ENCODE measurements at regions of chr4 and their contacts with region 1.

Region 1: GRCh38 chr4:40719008-40719623 is 30.6 kb upstream of the NSUN7 start:
- DNase-seq: peak; percentile 71
- H3K4me3 ChIP-seq: no peak overlapping the region
- H3K27ac ChIP-seq: no peak overlapping the region
- H3K4me1 ChIP-seq: peaks cover 8% of the 10 kb centered on the region
- CTCF ChIP-seq: peak; percentile 84

Region 2: DNA sequence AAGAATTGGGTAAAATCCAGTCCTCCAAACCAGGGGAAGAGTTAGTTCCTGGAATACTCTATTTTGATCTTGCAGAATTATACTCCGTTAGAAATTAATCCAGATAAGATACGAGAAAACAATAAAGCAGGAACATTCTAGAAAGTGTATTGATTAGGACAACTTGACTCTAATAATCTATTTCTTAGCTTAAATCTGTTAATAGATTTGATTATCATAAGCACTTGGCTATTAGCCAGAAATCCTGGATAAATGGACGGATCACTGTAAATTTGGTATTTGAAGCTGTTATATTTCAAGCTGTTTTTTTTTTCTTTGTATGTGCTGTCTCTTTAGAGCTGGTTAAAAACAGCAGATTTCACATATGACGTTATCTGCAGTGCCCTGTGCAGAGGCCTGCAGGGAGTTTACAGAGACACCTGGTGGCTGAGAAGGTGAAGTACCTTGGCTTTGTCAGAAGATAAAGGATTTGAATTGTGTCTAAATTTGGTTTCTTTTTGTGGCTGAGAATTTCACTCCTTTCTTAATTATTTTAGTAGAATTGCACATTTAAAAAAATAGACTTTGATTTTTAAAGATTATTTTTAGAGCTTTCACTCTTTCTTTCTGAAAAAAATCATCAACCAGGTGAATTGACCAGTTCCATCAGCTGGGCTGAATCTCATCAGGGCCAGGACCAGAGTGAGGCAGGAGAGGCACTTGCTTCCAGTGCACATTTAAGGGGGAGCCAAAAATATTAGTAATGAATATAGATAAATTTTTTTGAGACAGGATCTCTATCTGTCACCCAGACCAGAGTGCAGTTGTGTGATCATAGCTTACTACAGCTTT is 393.7 kb before region 1 on chr4:
- CTCF ChIA-PET with region 1: no interaction called
- POLR2A ChIA-PET with region 1: no interaction called
- intact Hi-C with region 1: loop called (anchors 2 kb)
- DNase-seq: peak; percentile 85
- H3K4me3 ChIP-seq: no peak overlapping the region
- H3K27ac ChIP-seq: no peak overlapping the region
- H3K4me1 ChIP-seq: peaks cover 4% of the 10 kb centered on the region
- CTCF ChIP-seq: peak; percentile 99